ENCODE measurements at regions of chr9 and their contacts with region 1.

Region 1: GRCh38 chr9:36407122-36407723 is 7.2 kb upstream of the RNF38 start:
- DNase-seq: peak in 3 of 6 donors; percentile 52 to 69 (median 53)
- ATAC-seq: peak; percentile 82 to 99 (median 98)
- H3K4me3 ChIP-seq: no peak overlapping the region
- H3K27ac ChIP-seq: peak overlapping the region in 1 of 4 donors; percentile 1
- H3K4me1 ChIP-seq: peaks cover 0 to 7% (median 0%) of the 10 kb centered on the region in 3 donors
- H3K27me3 ChIP-seq: no peaks in the 10 kb centered on the region
- CTCF ChIP-seq: peak; percentile 85 to 92 (median 87)

Region 2: GRCh38 chr9:36450110-36450732 is 43.0 kb after region 1 on chr9:
- intact Hi-C with region 1: loop called in 2 of 3 experiments (anchors 2 to 10 kb)
- DNase-seq: peak in 1 of 6 donors; percentile 31
- ATAC-seq: peak in 3 of 4 donors; percentile 51 to 77 (median 64)
- H3K4me3 ChIP-seq: no peak overlapping the region
- H3K27ac ChIP-seq: no peak overlapping the region
- H3K4me1 ChIP-seq: peaks cover 0 to 9% (median 8%) of the 10 kb centered on the region in 3 donors
- H3K27me3 ChIP-seq: no peaks in the 10 kb centered on the region
- CTCF ChIP-seq: peak; percentile 10 to 47 (median 43)

Region 3: DNA sequence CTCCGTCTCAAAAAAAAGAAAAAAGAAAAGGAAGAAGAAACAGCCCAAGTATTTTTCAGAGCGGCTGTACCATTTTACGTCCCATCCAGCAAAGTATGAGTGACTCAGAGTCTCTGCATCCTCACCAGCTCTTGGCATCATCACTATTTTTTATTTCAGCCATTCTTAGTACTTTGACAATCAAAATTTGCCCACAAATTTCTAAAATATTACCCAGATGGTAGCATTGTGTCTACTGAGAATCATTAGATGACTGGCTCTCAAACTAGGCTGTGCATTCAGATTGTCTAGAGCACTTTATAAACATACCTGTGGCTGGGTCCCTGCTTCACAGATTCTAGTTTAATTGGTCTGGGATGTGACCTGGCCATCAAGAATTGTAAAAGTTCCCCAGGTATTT is 143.9 kb after region 1 on chr9:
- intact Hi-C with region 1: loop called (anchors 5 to 10 kb)
- DNase-seq: no peak
- ATAC-seq: no peak
- H3K4me3 ChIP-seq: no peak overlapping the region
- H3K27ac ChIP-seq: no peak overlapping the region
- H3K4me1 ChIP-seq: no peaks in the 10 kb centered on the region
- H3K27me3 ChIP-seq: no peaks in the 10 kb centered on the region
- CTCF ChIP-seq: no peak

Region 4: GRCh38 chr9:36560857-36561221 is 153.6 kb after region 1 on chr9:
- intact Hi-C with region 1: loop called in 1 of 3 experiments (anchors 5 kb)
- DNase-seq: no peak
- ATAC-seq: no peak
- H3K4me3 ChIP-seq: no peak overlapping the region
- H3K27ac ChIP-seq: no peak overlapping the region
- H3K4me1 ChIP-seq: no peaks in the 10 kb centered on the region
- H3K27me3 ChIP-seq: no peaks in the 10 kb centered on the region
- CTCF ChIP-seq: no peak

Measured in pancreas (tissue), 10 donors.